ENCODE measurements at regions of chr6 and their contacts with region 1.

Region 1: GRCh38 chr6:52304983-52305390 is 20.4 kb upstream of the MCM3 start:
- DNase-seq: no peak
- H3K4me3 Mint-ChIP-seq: peak overlapping the region; percentile 19
- H3K27ac Mint-ChIP-seq: peak overlapping the region; percentile 81
- H3K4me1 Mint-ChIP-seq: peaks cover 65% of the 10 kb centered on the region
- H3K27me3 Mint-ChIP-seq: no peaks in the 10 kb centered on the region

Region 2: DNA sequence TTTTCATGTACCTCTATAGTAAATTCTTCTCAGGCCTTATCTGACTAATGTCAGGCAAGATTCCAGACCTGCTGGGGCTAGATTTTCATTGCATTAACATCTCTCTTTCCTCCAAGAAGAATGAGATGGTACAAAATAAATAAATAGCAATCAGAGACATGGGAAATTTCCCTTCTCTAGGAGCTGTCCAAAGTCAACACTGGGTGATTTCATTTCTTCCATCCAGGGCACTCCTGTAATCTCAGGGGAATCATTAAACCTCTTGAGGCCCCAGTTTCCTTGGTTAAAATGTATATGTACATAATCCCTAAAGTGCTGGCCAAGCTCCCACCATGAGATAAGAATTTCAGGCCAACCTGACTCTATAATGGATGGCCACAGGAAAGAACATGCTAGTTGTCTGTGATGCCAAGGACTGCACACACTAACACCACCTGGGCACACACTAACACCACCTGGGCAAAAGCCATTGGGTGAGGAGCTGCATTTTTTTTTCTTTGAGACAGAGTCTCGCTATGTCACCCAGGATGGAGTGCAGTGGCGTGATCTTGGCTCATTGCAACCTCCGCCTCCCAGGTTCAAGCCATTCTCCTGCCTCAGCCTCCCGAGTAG is 61.6 kb before region 1 on chr6:
- CTCF ChIA-PET with region 1: no interaction called
- DNase-seq: no peak
- H3K4me3 Mint-ChIP-seq: no peak overlapping the region
- H3K27ac Mint-ChIP-seq: no peak overlapping the region
- H3K4me1 Mint-ChIP-seq: no peaks in the 10 kb centered on the region
- H3K27me3 Mint-ChIP-seq: peaks cover 16% of the 10 kb centered on the region

Region 3: GRCh38 chr6:52389626-52390360 is 84.8 kb after region 1 on chr6:
- CTCF ChIA-PET with region 1: interaction called, 14 read pairs
- DNase-seq: peak; percentile 69
- H3K4me3 Mint-ChIP-seq: peak overlapping the region; percentile 66
- H3K27ac Mint-ChIP-seq: peak overlapping the region; percentile 98
- H3K4me1 Mint-ChIP-seq: peaks cover 80% of the 10 kb centered on the region
- H3K27me3 Mint-ChIP-seq: no peaks in the 10 kb centered on the region

Region 4: GRCh38 chr6:52399511-52400312 is 94.7 kb after region 1 on chr6:
- CTCF ChIA-PET with region 1: interaction called, 12 read pairs
- DNase-seq: peak; percentile 60
- H3K4me3 Mint-ChIP-seq: no peak overlapping the region
- H3K27ac Mint-ChIP-seq: peak overlapping the region; percentile 97
- H3K4me1 Mint-ChIP-seq: peaks cover 68% of the 10 kb centered on the region
- H3K27me3 Mint-ChIP-seq: no peaks in the 10 kb centered on the region